ENCODE measurements at regions of chr1 and their contacts with region 1.

Region 1: DNA sequence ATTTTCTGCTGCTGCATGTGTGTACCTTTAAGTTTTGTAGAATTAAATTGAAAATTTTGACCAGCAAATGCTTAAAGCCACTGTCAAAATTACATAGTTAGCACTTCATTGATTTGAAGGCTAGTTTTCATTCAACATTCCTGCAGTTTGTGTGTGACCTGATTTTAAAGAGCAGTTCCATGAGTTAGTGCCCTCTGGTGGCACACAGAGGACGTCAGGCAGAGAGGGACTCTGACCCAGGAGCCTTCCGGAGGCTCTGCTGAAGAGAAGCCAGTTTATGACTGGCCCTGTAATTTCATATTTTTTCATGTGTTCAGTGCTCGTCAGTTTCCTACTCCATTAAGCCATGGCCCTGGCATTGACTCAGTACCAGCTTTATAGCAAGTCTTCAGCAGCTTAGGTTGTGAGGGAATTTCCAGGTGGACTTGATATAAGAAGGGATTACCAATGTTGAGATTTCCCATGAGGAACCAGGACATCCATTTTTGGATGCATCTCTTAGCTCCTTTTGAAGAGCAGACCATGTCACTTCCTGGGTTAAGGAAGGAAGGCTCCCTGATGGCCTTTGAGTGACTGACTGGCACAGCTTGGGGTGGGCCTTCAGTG is 104.7 kb downstream of the CAMTA1 start:
- DNase-seq: peak in 1 of 2 donors; percentile 40
- ATAC-seq: peak in 7 of 8 donors; percentile 61 to 84 (median 73)
- H3K4me3 ChIP-seq: no peak overlapping the region
- H3K27ac ChIP-seq: no peak overlapping the region
- H3K4me1 ChIP-seq: peaks cover 0 to 9% (median 6%) of the 10 kb centered on the region in 9 donors
- H3K27me3 ChIP-seq: no peaks in the 10 kb centered on the region
- CTCF ChIP-seq: peak; percentile 55 to 90 (median 82)

Region 2: GRCh38 chr1:6794164-6794563 is 95.8 kb before region 1 on chr1:
- intact Hi-C with region 1: loop called in 9 of 10 experiments (anchors 2 to 10 kb)
- DNase-seq: no peak
- ATAC-seq: no peak
- H3K4me3 ChIP-seq: no peak overlapping the region
- H3K27ac ChIP-seq: no peak overlapping the region
- H3K4me1 ChIP-seq: peaks cover 0 to 77% (median 55%) of the 10 kb centered on the region in 9 donors
- H3K27me3 ChIP-seq: no peaks in the 10 kb centered on the region
- CTCF ChIP-seq: peak in 7 of 9 donors; percentile 36 to 65 (median 58)

Region 3: GRCh38 chr1:6872573-6873261 is 17.3 kb before region 1 on chr1:
- intact Hi-C with region 1: no loop called
- DNase-seq: no peak
- ATAC-seq: no peak
- H3K4me3 ChIP-seq: no peak overlapping the region
- H3K27ac ChIP-seq: no peak overlapping the region
- H3K4me1 ChIP-seq: peaks cover 0 to 32% (median 19%) of the 10 kb centered on the region in 9 donors
- H3K27me3 ChIP-seq: no peaks in the 10 kb centered on the region
- CTCF ChIP-seq: no peak

Measured in heart right ventricle (tissue), 16 donors.